ENCODE measurements at regions of chr4 and their contacts with region 1.

Region 1: DNA sequence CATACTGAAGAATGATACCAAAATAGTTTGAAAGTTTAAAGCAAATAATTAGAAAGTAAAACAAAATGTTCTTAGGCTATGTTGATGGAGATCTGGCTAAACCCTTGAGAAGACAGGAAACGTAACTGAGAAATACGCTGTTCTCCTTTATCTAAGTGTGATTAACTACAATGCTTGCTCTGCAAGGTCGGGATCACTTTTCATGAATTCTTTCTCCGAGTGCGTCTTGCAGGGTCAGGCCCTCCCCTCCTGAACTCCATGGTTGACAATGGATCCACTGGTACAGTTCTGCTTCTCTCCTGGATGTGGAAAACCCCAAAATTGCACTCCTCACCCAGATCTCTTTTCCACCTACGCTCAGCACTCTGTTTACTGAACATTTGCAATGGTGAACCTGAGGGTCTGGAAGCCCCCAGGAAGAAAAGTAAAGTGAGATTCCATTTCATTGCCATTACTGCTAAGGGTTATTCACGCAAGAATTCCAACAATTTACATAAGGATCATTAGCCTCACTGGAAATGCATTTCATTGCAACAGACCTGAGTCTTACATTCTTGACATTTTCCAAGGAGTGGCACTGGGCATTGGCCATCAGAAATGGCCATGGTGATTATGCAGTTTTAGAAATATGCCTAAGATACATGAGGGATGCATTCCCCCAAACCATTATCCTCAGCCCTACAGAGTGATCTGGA is 24.6 kb upstream of the WWC2 start:
- DNase-seq: no peak
- ATAC-seq: no peak
- H3K4me3 ChIP-seq: no peak overlapping the region
- H3K4me3 Mint-ChIP-seq: no peak overlapping the region
- H3K27ac ChIP-seq: no peak overlapping the region
- H3K27ac Mint-ChIP-seq: no peak overlapping the region
- H3K4me1 ChIP-seq: no peaks in the 10 kb centered on the region
- H3K4me1 Mint-ChIP-seq: no peaks in the 10 kb centered on the region
- H3K27me3 ChIP-seq: no peaks in the 10 kb centered on the region
- H3K27me3 Mint-ChIP-seq: peaks cover 5% of the 10 kb centered on the region
- CTCF ChIP-seq: no peak

Region 2: GRCh38 chr4:182938205-182938645 is 136.2 kb before region 1 on chr4:
- CTCF ChIA-PET with region 1: no interaction called
- POLR2A ChIA-PET with region 1: no interaction called
- intact Hi-C with region 1: loop called (anchors 5 to 10 kb)
- DNase-seq: peak; percentile 22 to 77 (median 56)
- ATAC-seq: peak; percentile 82
- H3K4me3 ChIP-seq: no peak overlapping the region
- H3K4me3 Mint-ChIP-seq: no peak overlapping the region
- H3K27ac ChIP-seq: no peak overlapping the region
- H3K27ac Mint-ChIP-seq: no peak overlapping the region
- H3K4me1 ChIP-seq: peaks cover 4% of the 10 kb centered on the region
- H3K4me1 Mint-ChIP-seq: peaks cover 6% of the 10 kb centered on the region
- H3K27me3 ChIP-seq: no peaks in the 10 kb centered on the region
- H3K27me3 Mint-ChIP-seq: peaks cover 15% of the 10 kb centered on the region
- CTCF ChIP-seq: peak; percentile 87

Region 3: GRCh38 chr4:183142571-183143550 is 68.4 kb after region 1 on chr4:
- CTCF ChIA-PET with region 1: no interaction called
- POLR2A ChIA-PET with region 1: no interaction called
- intact Hi-C with region 1: loop called (anchors 2 to 5 kb)
- DNase-seq: no peak
- ATAC-seq: no peak
- H3K4me3 ChIP-seq: no peak overlapping the region
- H3K4me3 Mint-ChIP-seq: no peak overlapping the region
- H3K27ac ChIP-seq: no peak overlapping the region
- H3K27ac Mint-ChIP-seq: no peak overlapping the region
- H3K4me1 ChIP-seq: peaks cover 2% of the 10 kb centered on the region
- H3K4me1 Mint-ChIP-seq: peaks cover 12% of the 10 kb centered on the region
- H3K27me3 ChIP-seq: no peaks in the 10 kb centered on the region
- H3K27me3 Mint-ChIP-seq: no peaks in the 10 kb centered on the region
- CTCF ChIP-seq: no peak

Measured in CD4-positive, alpha-beta T cell (primary cell).